ENCODE measurements at regions of chr11 and their contacts with region 1.

Region 1: GRCh38 chr11:66466225-66467027 is at the start of gene PELI3:
- DNase-seq: peak; percentile 41
- H3K4me3 ChIP-seq: peak within 1 kb of the TSS; percentile 72
- H3K27me3 ChIP-seq: no peaks in the 10 kb centered on the region; the same call in 1 of the 2 replicates
- CTCF ChIP-seq: no peak
- polyA plus RNA-seq, gene PELI3: 4.9 and 8.0 TPM in 2 replicates

Region 2: DNA sequence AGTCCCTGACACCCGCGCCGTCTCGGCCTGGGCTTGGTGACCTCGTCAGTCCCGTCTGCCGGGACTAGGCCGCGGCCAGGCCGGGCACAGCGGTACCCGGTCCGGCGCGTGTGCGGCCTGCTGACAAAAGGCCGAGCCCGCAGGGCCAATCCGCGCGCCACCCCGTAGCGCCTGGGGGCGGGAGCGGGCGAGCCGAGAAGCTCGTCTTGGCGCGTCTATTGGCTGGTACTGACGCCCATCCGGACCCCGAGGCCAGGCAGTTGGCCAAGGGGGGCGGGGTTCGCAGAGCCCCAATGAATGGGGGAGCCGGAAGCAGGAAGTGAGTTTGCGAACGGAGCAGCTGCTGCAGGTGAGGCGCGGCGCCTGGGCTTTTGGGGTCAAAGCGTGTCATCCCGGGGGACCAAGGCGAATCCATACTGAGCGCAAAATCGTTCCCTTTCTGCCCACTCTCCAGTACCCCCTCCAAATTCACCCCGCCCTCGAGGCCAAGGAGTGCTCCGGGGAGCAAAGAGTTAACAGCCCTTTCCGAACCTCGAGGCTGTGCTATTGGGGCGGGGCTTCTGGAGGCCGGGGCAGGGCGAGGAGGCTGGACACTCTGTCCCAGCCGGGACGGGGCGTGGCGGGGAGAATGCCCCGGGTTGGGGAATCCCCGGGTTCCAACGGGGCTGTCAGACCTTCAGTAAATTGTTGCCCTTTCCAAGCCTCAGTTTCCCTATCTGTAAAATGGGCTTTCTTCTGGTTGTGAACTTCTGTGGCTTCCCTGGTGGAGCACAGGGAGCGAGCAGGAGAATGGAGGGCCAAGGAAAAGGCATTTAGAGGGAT is 13.9 kb after region 1 on chr11 and contains the start of gene DPP3:
- CTCF ChIA-PET with region 1: interaction called, 18 read pairs
- POLR2A ChIA-PET with region 1: interaction called, 7 read pairs
- DNase-seq: peak; percentile 77
- H3K4me3 ChIP-seq: peak within 1 kb of the TSS; percentile 69
- H3K27me3 ChIP-seq: no peaks in the 10 kb centered on the region
- CTCF ChIP-seq: no peak
- polyA plus RNA-seq, gene DPP3: 49.5 and 85.2 TPM in 2 replicates

Region 3: DNA sequence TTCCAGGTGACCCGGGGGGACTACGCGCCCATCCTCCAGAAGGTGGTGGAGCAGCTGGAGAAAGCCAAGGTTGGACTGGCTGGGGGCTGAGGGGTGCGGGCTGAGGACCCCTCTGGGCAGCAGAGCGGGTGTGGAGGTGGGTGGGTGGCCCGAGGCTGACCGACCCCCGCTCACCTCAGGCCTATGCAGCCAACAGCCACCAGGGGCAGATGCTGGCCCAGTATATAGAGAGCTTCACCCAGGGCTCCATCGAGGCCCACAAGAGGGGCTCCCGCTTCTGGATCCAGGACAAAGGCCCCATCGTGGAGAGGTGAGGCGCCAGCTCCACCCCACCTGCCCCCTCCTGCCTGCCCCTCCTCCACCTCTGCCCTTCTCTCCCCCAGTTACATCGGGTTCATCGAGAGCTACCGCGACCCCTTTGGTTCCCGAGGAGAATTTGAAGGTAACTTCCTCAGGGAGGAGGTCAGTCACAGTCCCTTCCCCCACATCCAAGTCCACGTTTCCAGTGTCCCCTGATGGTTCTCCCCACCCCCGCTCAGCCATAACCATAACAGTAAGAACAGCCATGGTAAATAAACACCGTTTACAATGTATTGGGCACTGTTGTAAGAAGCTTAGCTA is 25.0 kb after region 1 on chr11:
- CTCF ChIA-PET with region 1: no interaction called
- POLR2A ChIA-PET with region 1: interaction called, 12 read pairs
- DNase-seq: no peak
- H3K4me3 ChIP-seq: no peak overlapping the region
- H3K27me3 ChIP-seq: no peaks in the 10 kb centered on the region
- CTCF ChIP-seq: peak; percentile 52